Heart left ventricle (tissue), 16 donors: ENCODE measurements at regions of chr15 and their contacts with region 1.

Region 1: GRCh38 chr15:92077353-92078085 is 224.0 kb downstream of the SLCO3A1 start:
- DNase-seq: peak; percentile 72 to 83 (median 81)
- ATAC-seq: peak; percentile 63 to 82 (median 80)
- H3K4me3 ChIP-seq: no peak overlapping the region
- H3K27ac ChIP-seq: peak overlapping the region in 1 of 12 donors; percentile 10
- H3K4me1 ChIP-seq: peaks cover 8 to 71% (median 57%) of the 10 kb centered on the region in 12 donors
- H3K27me3 ChIP-seq: no peaks in the 10 kb centered on the region
- CTCF ChIP-seq: peak; percentile 61 to 89 (median 82)
- POLR2A ChIP-seq: no peak

Region 2: DNA sequence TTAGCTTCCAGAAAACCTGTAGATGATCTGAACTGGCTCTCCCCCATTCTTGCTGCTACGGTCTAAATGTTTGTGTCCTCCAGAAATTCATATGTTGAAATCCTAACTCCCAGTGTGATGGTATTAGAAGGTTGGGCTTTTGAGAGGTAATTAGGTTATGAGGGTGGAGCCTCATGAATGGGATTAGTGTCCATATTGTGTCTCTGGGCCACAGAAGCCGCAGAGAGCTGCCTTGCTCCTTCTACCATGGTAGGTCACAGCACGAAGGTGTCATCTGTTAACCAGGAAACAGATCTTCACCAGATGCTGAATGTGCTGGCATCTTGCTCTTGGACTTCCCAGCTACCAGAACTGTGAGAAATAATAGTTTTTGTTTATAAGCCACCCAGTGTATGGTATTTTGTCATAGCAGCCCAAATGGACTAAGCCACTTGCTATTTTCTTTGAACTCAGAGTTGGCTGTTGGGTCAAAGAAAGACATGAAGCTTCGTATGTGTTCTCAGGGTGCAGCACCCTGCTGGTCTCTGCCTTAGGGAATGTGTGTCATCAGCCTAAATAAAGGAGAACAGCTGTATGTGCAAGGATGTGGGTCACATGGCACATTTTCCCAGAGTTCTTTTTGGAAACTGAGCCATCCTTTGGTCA is 541.5 kb before region 1 on chr15:
- intact Hi-C with region 1: loop called in 1 of 10 experiments (anchors 10 kb)
- DNase-seq: no peak
- ATAC-seq: peak in 3 of 4 donors; percentile 13 to 44 (median 31)
- H3K4me3 ChIP-seq: no peak overlapping the region
- H3K27ac ChIP-seq: peak overlapping the region in 4 of 12 donors; percentile 15 to 47 (median 34)
- H3K4me1 ChIP-seq: peaks cover 0 to 29% (median 9%) of the 10 kb centered on the region in 12 donors
- H3K27me3 ChIP-seq: no peaks in the 10 kb centered on the region
- CTCF ChIP-seq: no peak
- POLR2A ChIP-seq: no peak

Region 3: DNA sequence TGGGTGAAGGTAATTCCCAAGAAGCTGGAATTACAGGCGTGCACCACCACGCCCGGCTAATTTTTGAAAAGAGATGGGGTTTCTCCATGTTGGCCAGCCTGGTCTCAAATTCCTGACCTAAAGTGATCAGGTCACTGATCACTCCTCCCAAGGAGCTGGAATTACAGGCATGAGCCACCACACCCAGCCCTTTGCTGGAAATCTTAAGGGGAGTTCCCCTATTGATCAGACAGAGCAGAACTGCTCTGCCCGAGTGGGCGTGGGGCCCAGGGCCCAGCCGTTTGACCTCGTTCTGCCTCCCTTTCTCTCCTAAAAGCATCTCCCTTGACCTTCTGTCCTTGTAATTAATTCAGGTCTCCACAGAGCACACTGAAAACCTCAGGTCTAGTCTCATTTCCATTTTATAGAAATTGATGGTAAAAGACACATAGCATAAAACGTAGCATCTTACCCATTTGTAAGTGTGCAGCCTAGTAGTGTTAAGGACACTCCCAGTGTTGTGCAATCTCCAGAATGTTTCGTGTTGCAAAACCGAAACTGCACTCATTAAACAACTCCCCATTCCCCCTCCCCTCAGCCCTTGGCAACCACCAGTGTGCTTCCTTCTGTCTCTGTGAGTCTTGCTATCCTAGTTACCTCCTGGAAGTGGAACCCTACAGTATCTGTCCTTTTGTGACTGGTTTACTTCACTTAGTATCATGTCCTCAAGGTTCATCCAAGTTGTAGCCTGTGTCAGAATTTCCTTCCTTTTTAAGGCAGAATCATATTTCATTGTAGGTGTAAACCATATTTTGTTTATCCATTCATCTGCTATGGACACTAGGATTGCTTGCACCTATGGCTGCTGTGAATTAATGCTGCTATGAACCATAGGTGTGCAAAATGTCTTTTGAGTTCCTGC is 134.6 kb before region 1 on chr15:
- intact Hi-C with region 1: loop called in 8 of 10 experiments (anchors 2 to 10 kb)
- DNase-seq: peak in 4 of 5 donors; percentile 81 to 87 (median 86)
- ATAC-seq: peak; percentile 71 to 87 (median 86)
- H3K4me3 ChIP-seq: peak overlapping the region in 8 of 12 donors; percentile 1 to 39 (median 23)
- H3K27ac ChIP-seq: peak overlapping the region in 11 of 12 donors; percentile 30 to 86 (median 66)
- H3K4me1 ChIP-seq: peaks cover 12 to 98% (median 83%) of the 10 kb centered on the region in 12 donors
- H3K27me3 ChIP-seq: no peaks in the 10 kb centered on the region
- CTCF ChIP-seq: no peak
- POLR2A ChIP-seq: no peak

Region 4: GRCh38 chr15:91970142-91970541 is 107.4 kb before region 1 on chr15:
- intact Hi-C with region 1: loop called in 2 of 10 experiments (anchors 5 to 10 kb)
- DNase-seq: peak; percentile 63 to 88 (median 81)
- ATAC-seq: peak; percentile 81 to 87 (median 83)
- H3K4me3 ChIP-seq: no peak overlapping the region
- H3K27ac ChIP-seq: peak overlapping the region in 10 of 12 donors; percentile 35 to 72 (median 57)
- H3K4me1 ChIP-seq: peaks cover 4 to 85% (median 75%) of the 10 kb centered on the region in 12 donors
- H3K27me3 ChIP-seq: no peaks in the 10 kb centered on the region
- CTCF ChIP-seq: no peak
- POLR2A ChIP-seq: no peak